Activated CD8-positive, alpha-beta T cell treated with anti-CD3 and anti-CD28 coated beads, Interleukin-2, amount 10 ng/mL, durations not matched to agents 7 days and 5 days (primary cell): ENCODE measurements at regions of chr16 and their contacts with region 1.

Region 1: GRCh38 chr16:85615852-85616606 is 2.9 kb downstream of the GSE1 start:
- DNase-seq: peak; percentile 91
- ATAC-seq: peak; percentile 48
- H3K4me3 Mint-ChIP-seq: peak overlapping the region; percentile 76
- H3K27ac Mint-ChIP-seq: peak overlapping the region; percentile 75
- H3K4me1 Mint-ChIP-seq: peaks cover 42% of the 10 kb centered on the region
- H3K27me3 Mint-ChIP-seq: no peaks in the 10 kb centered on the region

Region 2: DNA sequence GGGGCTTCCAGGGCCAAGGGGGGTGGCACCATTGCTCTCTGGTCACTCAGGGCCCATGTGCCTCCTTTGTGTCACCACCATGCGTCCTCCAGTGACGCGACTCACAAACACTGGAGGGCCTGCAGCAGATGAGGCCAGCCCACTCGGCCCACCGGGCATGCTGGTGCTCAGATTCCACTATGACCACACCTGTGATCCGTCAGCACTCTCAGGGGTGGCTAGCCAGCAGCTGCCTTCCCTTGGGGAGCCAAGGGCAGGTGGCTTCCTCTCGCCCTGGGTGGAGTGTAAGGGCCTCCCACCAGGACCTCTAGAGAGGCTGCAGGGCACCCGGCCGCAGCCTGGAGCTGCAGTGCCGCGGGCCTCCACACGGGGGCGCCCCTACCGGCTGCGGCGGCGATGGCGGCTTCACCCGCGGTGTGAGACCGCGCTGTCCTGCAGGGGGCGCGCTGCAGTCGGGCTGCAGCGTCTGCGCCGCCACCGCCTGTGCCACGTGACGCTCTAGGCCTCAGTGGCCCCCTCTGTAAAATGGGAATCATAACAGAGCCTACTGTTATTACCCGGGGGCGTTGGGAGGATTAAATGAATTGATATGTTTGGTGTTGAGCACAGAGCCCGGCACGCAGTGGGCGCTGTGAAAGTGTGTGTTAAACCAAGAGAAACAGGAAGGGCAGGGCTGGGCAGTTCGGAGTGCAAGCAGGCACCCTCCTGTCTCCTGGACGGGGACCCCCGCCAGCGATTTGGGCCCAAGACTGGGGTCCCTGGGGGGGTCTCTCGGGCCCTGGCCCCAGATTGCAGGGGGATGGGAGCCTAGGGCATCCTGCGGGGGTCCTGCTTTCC is 195.3 kb before region 1 on chr16:
- CTCF ChIA-PET with region 1: interaction called, 79 read pairs
- POLR2A ChIA-PET with region 1: no interaction called
- DNase-seq: peak; percentile 79
- ATAC-seq: peak; percentile 81
- H3K4me3 Mint-ChIP-seq: no peak overlapping the region
- H3K27ac Mint-ChIP-seq: no peak overlapping the region
- H3K4me1 Mint-ChIP-seq: peaks cover 9% of the 10 kb centered on the region
- H3K27me3 Mint-ChIP-seq: no peaks in the 10 kb centered on the region

Region 3: GRCh38 chr16:85441189-85441889 is 174.7 kb before region 1 on chr16:
- CTCF ChIA-PET with region 1: interaction called, 12 read pairs
- POLR2A ChIA-PET with region 1: no interaction called
- DNase-seq: no peak
- ATAC-seq: no peak
- H3K4me3 Mint-ChIP-seq: no peak overlapping the region
- H3K27ac Mint-ChIP-seq: no peak overlapping the region
- H3K4me1 Mint-ChIP-seq: no peaks in the 10 kb centered on the region
- H3K27me3 Mint-ChIP-seq: no peaks in the 10 kb centered on the region

Region 4: GRCh38 chr16:85528528-85529387 is 87.3 kb before region 1 on chr16:
- CTCF ChIA-PET with region 1: interaction called, 12 read pairs
- POLR2A ChIA-PET with region 1: no interaction called
- DNase-seq: peak; percentile 32
- ATAC-seq: no peak
- H3K4me3 Mint-ChIP-seq: no peak overlapping the region
- H3K27ac Mint-ChIP-seq: no peak overlapping the region
- H3K4me1 Mint-ChIP-seq: no peaks in the 10 kb centered on the region
- H3K27me3 Mint-ChIP-seq: no peaks in the 10 kb centered on the region

Region 5: DNA sequence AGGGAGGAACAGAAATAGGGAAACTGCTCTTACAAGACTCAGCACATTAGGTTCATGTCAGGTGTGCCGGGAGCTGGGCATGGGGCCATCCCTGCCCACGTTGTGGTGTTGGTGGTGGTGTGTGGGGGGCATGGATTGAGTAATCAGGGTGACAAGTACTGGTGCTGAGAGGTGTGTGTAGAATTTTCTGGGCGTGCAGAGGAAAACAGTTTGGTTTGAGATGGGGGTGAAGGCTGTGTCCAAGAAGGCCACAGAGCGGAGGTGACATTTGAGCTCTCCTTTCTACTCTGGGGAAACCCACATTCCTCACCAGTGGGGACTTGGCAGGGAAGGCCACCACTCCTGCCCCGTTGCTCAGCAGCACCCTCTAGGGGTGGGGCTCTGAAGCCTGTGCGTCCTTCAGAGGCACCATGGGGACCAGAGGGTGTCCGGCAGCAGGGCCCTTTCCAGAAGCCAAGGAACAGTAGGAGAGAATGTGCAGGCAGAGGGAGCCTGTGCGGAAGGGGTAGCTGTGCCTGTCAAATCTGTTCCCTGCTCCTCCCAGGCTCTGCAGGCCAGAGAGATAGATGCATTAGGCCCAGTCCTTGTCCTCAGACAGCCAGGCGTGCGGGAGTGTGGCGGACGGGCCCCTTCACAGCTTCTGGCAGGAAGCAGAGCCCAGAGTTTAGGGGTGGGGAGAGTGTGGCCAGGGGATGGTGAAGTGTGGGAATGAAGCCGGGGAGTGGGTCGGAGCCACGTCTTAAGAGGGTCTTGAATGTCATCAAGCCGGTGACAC is 51.6 kb before region 1 on chr16:
- CTCF ChIA-PET with region 1: interaction called, 29 read pairs
- POLR2A ChIA-PET with region 1: interaction called, 3 read pairs
- DNase-seq: no peak
- ATAC-seq: peak; percentile 24
- H3K4me3 Mint-ChIP-seq: no peak overlapping the region
- H3K27ac Mint-ChIP-seq: peak overlapping the region; percentile 16
- H3K4me1 Mint-ChIP-seq: peaks cover 54% of the 10 kb centered on the region
- H3K27me3 Mint-ChIP-seq: no peaks in the 10 kb centered on the region

Region 6: GRCh38 chr16:85659805-85660495 is 43.9 kb after region 1 on chr16:
- CTCF ChIA-PET with region 1: interaction called, 14 read pairs
- POLR2A ChIA-PET with region 1: no interaction called
- DNase-seq: peak; percentile 76
- ATAC-seq: peak; percentile 71
- H3K4me3 Mint-ChIP-seq: no peak overlapping the region
- H3K27ac Mint-ChIP-seq: no peak overlapping the region
- H3K4me1 Mint-ChIP-seq: no peaks in the 10 kb centered on the region
- H3K27me3 Mint-ChIP-seq: no peaks in the 10 kb centered on the region